Activated CD8-positive, alpha-beta T cell treated with anti-CD3 and anti-CD28 coated beads for 36 hours (primary cell): ENCODE measurements at regions of chr10 and their contacts with region 1.

Region 1: DNA sequence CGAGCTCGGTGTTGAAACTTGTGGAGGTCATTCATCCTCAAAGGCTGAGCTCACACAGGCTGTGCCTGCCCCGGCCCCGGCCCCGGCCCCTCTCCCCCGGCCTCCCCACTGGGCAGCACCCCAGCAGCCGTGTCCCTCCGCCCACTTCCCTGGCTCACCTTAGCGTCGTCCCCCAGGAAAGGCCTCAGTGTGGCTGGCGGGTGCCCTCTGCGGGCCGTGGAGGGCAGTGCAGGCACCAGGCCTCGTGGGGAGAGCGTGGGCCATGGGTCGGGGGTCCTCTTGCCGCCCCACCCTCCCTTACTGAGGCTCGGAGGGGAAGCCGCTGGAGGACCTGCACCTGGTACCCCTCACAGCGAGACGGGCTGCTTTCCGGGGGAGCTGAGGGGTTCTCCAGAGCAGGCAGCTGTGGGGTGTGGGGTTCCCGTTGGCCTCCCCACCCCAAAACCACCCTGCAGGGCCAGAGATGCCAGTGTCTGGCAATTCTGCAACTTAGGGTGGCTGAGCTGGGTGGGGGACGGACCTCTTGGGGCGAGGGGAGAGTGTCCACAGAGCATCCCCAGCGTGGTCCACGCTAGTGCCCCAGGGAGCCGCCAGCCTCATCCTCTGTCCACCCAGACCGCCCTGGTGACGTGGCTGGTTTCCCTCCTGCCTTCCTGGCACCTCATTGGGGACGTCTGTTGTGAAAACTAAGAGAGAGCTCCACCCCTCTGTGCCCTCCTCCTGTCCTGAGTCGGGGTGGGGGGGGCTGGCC is 44.2 kb upstream of the DPYSL4 start:
- DNase-seq: peak; percentile 67
- ATAC-seq: peak; percentile 88
- H3K4me3 Mint-ChIP-seq: no peak overlapping the region
- H3K27ac Mint-ChIP-seq: no peak overlapping the region
- H3K4me1 Mint-ChIP-seq: peaks cover 2% of the 10 kb centered on the region
- H3K27me3 Mint-ChIP-seq: peaks cover 3% of the 10 kb centered on the region
- CTCF ChIP-seq: peak; percentile 92

Region 2: DNA sequence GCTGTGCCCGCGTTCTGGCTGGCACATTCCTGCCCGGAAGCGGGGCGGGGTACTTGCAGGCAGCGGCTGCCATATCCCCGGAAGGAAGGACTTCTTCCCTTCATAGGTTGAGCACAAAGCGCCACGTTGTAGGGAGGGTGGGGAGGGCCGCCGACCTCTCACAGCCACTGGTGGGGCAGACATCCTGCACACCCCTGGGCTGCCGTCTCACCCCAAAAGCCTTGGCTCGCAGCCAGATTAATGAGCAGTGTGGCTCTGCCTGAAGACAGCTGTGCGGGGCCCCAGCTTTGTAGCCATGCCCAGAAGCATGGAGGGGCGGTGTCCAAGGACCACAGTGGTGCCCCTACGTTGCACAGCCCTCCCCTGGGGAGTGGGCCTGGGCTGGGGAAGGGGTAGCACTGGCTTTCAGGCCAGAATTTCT is 10.2 kb before region 1 on chr10:
- CTCF ChIA-PET with region 1: interaction called, 13 read pairs
- POLR2A ChIA-PET with region 1: no interaction called
- intact Hi-C with region 1: no loop called
- DNase-seq: no peak
- ATAC-seq: no peak
- H3K4me3 Mint-ChIP-seq: no peak overlapping the region
- H3K27ac Mint-ChIP-seq: no peak overlapping the region
- H3K4me1 Mint-ChIP-seq: no peaks in the 10 kb centered on the region
- H3K27me3 Mint-ChIP-seq: peaks cover 6% of the 10 kb centered on the region
- CTCF ChIP-seq: no peak